Activated CD4-positive, alpha-beta T cell treated with anti-CD3 and anti-CD28 coated beads for 36 hours (primary cell): ENCODE measurements at regions of chr9 and their contacts with region 1.

Region 1: DNA sequence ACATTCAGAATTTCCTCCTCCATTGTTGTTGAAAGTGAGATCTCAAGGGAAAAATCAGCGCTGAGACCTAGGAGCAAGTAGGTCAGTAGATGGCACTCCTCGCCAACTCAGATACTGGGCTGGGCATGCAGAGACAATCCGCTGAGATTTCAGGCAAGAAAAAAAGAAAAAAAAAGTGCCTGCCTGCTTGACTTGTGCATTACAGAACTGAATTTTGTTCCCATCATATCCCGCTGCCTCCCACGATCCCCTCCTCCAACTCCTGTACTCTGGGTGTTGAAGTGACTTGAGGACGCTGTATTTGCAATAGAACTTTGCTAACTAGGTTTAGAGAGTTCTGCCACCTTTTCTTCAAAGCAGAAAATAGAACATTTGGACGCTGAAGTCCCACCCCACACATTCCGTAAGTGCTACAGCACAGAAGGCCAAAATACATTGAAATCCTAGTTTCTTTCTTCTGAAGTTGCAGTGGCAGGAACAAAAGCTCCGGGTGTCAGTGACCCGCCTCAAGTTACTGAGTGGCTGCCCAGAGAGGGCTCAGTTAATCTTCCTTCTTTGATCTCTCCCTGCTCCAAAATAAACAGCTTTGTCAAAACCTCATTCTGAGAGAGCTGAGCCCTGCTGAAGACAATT is 265.8 kb downstream of the MLLT3 start:
- DNase-seq: peak; percentile 76
- ATAC-seq: peak; percentile 34
- H3K4me3 Mint-ChIP-seq: no peak overlapping the region
- H3K27ac Mint-ChIP-seq: peak overlapping the region; percentile 0
- H3K4me1 Mint-ChIP-seq: peaks cover 62% of the 10 kb centered on the region
- H3K27me3 Mint-ChIP-seq: no peaks in the 10 kb centered on the region

Region 2: GRCh38 chr9:18707061-18707461 is 1649.5 kb before region 1 on chr9:
- CTCF ChIA-PET with region 1: no interaction called
- POLR2A ChIA-PET with region 1: no interaction called
- intact Hi-C with region 1: no loop called
- DNase-seq: no peak
- ATAC-seq: no peak
- H3K4me3 Mint-ChIP-seq: no peak overlapping the region
- H3K27ac Mint-ChIP-seq: no peak overlapping the region
- H3K4me1 Mint-ChIP-seq: no peaks in the 10 kb centered on the region
- H3K27me3 Mint-ChIP-seq: no peaks in the 10 kb centered on the region

Region 3: GRCh38 chr9:19976226-19976625 is 380.3 kb before region 1 on chr9:
- CTCF ChIA-PET with region 1: no interaction called
- POLR2A ChIA-PET with region 1: interaction called, 4 read pairs
- intact Hi-C with region 1: loop called in 1 of 2 experiments (anchors 1 kb)
- DNase-seq: peak; percentile 49
- ATAC-seq: peak; percentile 96
- H3K4me3 Mint-ChIP-seq: no peak overlapping the region
- H3K27ac Mint-ChIP-seq: peak overlapping the region; percentile 88
- H3K4me1 Mint-ChIP-seq: peaks cover 25% of the 10 kb centered on the region
- H3K27me3 Mint-ChIP-seq: peaks cover 2% of the 10 kb centered on the region

Region 4: DNA sequence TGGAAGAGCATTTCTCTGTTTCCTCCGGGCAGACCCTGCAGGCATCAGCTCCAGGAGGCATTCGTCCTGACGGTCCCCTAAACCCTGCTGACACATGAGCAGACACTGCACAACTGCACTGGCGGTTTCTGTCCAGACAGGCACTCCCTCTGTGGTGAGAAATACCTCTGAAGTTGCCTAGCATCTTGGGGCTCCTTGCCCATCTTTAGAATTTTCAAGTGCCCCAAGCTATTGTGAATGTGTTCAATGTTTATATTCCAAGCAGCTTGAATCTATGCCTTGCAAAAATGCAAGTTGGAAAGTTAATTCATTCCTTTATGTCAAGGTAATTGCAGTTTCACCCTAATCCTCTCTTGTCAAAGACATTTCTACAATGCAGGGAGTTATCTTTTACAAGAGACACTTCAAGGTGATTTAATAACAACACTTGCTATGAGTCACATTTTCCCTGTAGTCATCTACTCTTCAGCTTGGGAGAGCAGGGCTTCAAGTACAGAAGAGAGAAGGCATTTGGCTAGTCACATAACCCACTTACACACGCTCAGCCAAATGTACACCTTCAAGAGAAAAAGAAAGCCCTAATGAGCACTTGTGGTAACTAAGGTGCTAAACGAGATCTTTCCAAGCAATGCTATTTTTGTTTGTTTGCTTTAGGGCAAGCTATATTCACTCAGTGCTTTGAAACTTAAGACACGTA is 36.7 kb before region 1 on chr9:
- CTCF ChIA-PET with region 1: interaction called, 7 read pairs
- POLR2A ChIA-PET with region 1: interaction called, 3 read pairs
- intact Hi-C with region 1: loop called (anchors 1 to 2 kb)
- DNase-seq: peak; percentile 52
- ATAC-seq: peak; percentile 74
- H3K4me3 Mint-ChIP-seq: no peak overlapping the region
- H3K27ac Mint-ChIP-seq: peak overlapping the region; percentile 29
- H3K4me1 Mint-ChIP-seq: peaks cover 90% of the 10 kb centered on the region
- H3K27me3 Mint-ChIP-seq: no peaks in the 10 kb centered on the region

Region 5: DNA sequence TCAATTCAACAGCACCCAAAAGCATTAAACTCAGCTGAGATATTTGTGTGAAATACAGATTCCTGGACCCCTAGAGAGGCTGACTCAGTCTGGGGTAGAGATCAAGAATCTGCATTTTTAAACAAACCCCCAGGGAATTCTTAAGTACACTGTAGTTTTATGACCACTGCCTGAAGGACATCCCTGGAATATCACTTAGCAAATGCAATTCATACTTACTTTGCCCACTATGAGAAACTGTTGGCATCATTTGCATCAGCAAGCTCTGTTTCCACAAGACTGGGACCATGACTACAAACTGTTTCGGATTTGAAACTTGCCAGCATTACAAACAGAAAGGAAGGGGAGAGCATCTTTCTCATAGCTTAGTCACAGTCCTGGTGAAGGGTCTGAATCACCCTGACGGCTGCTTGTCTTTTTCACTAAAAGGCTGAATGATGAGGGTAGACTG is 202.1 kb after region 1 on chr9:
- CTCF ChIA-PET with region 1: interaction called, 4 read pairs
- POLR2A ChIA-PET with region 1: no interaction called
- intact Hi-C with region 1: loop called (anchors 2 to 5 kb)
- DNase-seq: peak; percentile 61
- ATAC-seq: peak; percentile 92
- H3K4me3 Mint-ChIP-seq: no peak overlapping the region
- H3K27ac Mint-ChIP-seq: peak overlapping the region; percentile 86
- H3K4me1 Mint-ChIP-seq: peaks cover 85% of the 10 kb centered on the region
- H3K27me3 Mint-ChIP-seq: no peaks in the 10 kb centered on the region

Region 6: GRCh38 chr9:21031091-21031807 is 674.7 kb after region 1 on chr9 and contains the start of gene HACD4:
- CTCF ChIA-PET with region 1: no interaction called
- POLR2A ChIA-PET with region 1: no interaction called
- intact Hi-C with region 1: loop called (anchors 2 kb)
- DNase-seq: peak; percentile 79
- ATAC-seq: peak; percentile 79
- H3K4me3 Mint-ChIP-seq: peak within 1 kb of the TSS; percentile 53
- H3K27ac Mint-ChIP-seq: peak within 1 kb of the TSS; percentile 71
- H3K4me1 Mint-ChIP-seq: peaks cover 26% of the 10 kb centered on the region
- H3K27me3 Mint-ChIP-seq: no peaks in the 10 kb centered on the region
- total RNA-seq, gene HACD4: 2.7 to 3.0 TPM